GM23248 (cell line): ENCODE measurements at regions of chr15 and their contacts with region 1.

Region 1: DNA sequence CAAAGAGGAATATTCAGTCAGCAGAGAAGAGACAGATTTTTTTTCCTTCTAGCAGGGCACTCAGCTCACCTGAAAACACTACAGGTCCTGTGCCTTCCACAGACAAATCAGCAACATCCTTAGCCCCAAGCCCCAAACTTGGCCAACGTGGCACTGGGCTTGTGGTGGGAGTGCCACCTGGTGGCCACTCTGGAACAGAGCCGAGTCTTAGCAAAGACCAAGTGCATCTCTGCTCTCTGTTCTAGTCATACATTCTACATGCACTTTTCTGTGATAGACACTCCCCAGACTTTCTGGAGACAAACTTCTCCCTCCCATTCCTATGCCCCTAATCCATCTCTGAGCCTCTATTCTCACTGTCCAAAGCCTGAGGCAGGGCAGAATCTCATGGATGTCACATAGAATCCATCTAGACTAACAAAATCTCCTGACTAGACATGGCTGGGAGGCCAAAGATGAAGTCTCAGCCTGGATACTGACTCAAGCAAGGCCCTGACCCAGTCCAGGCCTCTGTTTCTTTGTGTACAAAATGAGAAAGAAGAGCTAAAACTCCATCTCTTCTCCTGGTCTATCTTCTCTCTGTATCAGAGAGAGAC is 5.1 kb upstream of the SEMA7A start:
- DNase-seq: peak; percentile 89
- H3K4me3 ChIP-seq: no peak overlapping the region
- H3K27ac ChIP-seq: no peak overlapping the region
- H3K4me1 ChIP-seq: peaks cover 22% of the 10 kb centered on the region
- H3K27me3 ChIP-seq: no peaks in the 10 kb centered on the region

Region 2: DNA sequence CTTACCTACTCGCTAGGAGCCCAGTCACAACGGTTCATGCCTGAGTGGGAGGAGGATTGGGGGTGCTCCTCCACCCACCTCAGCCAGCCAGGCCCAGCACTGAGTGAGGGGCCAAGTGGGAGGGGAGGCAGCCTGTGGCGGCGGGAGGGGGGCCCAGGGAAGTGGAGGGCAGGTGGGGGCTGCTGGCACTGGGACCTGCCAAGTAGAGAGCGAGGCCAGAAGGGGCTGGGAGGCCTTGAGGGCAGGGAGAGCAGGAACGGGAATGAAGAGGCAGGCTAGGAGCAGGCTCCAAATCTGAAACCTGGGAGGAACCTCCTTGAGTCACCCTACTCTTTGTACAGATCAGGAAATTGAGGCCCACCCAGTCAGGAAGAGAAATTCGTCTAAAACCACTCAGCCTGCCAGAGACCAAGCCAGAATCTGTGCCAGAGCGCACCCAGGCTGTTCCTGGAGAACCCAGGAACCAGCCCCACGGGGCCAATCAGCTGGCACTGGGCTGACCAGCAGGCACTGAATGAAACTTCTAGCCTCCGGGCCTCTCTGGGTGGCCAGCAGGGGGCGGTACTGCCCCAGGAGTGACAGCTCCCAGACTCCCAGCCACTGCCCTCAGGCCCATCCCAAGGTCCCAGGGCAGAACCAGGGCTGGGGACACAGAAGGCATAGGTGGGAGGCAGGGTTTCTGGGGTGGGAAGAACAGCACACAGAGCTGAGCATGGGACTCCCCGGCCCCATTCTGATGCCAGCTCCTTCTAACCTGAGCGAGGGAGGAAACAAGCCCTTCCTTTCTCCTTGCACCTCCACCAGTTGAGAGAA is 56.6 kb before region 1 on chr15:
- in situ Hi-C with region 1: loop called (anchors 5 kb)
- DNase-seq: peak; percentile 87
- H3K4me3 ChIP-seq: no peak overlapping the region
- H3K27ac ChIP-seq: peak overlapping the region; percentile 66
- H3K4me1 ChIP-seq: peaks cover 31% of the 10 kb centered on the region
- H3K27me3 ChIP-seq: no peaks in the 10 kb centered on the region

Region 3: GRCh38 chr15:74680456-74680855 is 241.6 kb after region 1 on chr15:
- in situ Hi-C with region 1: no loop called
- DNase-seq: no peak
- H3K4me3 ChIP-seq: no peak overlapping the region
- H3K27ac ChIP-seq: no peak overlapping the region
- H3K4me1 ChIP-seq: no peaks in the 10 kb centered on the region
- H3K27me3 ChIP-seq: no peaks in the 10 kb centered on the region

Region 4: GRCh38 chr15:74768771-74769342 is 330.0 kb after region 1 on chr15:
- in situ Hi-C with region 1: no loop called
- DNase-seq: peak; percentile 72
- H3K4me3 ChIP-seq: peak overlapping the region; percentile 38; the same call in 1 of the 2 replicates
- H3K27ac ChIP-seq: no peak overlapping the region
- H3K4me1 ChIP-seq: 0 out of 2 replicates have a peak, but pooled peaks cover 5% of the 10 kb centered on the region
- H3K27me3 ChIP-seq: no peaks in the 10 kb centered on the region